Left cardiac atrium (tissue), 4 donors: ENCODE measurements at regions of chr5 and their contacts with region 1.

Region 1: DNA sequence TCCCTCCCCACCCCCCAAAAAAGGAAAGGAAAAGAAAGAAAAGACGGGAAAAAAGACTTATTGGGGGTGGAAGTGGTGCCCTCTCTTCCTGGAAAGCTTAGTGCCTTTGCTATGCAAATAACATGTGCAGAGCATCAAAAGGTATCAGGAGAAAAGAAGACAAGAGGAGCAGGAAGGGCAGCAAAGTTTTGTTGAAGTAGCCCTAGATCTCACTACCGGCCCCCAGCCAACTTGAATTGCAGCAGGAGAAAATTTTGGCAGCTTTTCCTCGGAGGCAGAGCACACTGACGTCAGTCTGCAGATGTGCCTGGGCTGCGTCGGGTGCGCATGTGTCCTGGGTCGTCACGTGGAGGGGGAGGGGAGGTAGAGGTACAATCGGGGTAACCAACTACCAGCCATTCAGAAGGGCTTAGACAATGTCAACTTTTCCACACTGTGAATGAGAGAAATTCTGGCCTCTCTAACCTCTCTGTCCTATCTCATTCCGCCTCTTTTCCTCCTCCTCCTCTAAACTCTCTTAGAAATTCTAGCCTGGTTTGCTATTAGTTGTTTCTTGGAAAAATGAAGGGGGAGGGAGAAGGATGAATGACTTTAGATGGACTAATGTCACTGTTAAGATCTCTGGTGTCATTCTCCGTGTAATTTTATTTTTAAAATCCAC is at the start of gene ADAMTS6:
- DNase-seq: peak; percentile 94
- ATAC-seq: peak; percentile 95
- total RNA-seq, gene ADAMTS6: 1.7 TPM

Region 2: GRCh38 chr5:64634997-64635686 is 846.6 kb before region 1 on chr5:
- intact Hi-C with region 1: loop called (anchors 10 kb)
- DNase-seq: no peak
- ATAC-seq: no peak

Region 3: DNA sequence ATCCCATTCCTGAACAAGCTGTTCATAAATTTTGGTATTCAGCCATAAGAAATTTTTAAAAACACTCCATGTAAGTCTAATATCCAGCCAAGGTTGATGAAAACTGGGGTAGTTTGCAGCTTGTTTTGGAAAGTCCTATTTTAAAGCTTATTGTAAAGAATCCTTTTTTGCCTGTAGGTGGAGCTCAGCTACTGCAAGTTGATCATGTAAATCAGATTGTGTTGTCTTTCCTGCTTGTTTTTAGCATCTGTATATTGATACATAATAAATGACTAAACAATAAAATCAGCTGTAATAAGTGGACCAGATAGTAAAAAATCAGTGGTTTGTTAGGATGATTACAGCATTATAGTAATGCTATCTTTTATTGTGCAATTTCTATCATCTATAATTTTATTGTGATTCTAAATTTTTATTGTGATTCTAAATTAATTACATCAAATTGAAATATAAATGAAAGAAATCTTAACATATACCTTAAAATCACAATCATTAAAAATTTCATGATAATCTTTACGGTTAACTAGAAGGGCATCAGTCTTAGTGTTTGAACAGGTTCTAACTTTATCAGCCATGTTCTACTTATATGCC is 670.6 kb before region 1 on chr5:
- intact Hi-C with region 1: loop called in 1 of 2 experiments (anchors 2 kb)
- DNase-seq: no peak
- ATAC-seq: peak in 1 of 2 donors; percentile 65

Region 4: GRCh38 chr5:64958757-64959391 is 522.9 kb before region 1 on chr5:
- intact Hi-C with region 1: loop called (anchors 5 to 10 kb)
- DNase-seq: no peak
- ATAC-seq: no peak

Region 5: GRCh38 chr5:64965613-64966012 is 516.2 kb before region 1 on chr5:
- intact Hi-C with region 1: loop called in 1 of 2 experiments (anchors 10 kb)
- DNase-seq: no peak
- ATAC-seq: no peak

Region 6: GRCh38 chr5:65102828-65103711 is 378.7 kb before region 1 on chr5:
- intact Hi-C with region 1: loop called (anchors 2 to 10 kb)
- DNase-seq: peak; percentile 68
- ATAC-seq: peak; percentile 87 to 90

Region 7: GRCh38 chr5:65356282-65356681 is 125.5 kb before region 1 on chr5:
- intact Hi-C with region 1: no loop called
- DNase-seq: no peak
- ATAC-seq: no peak